ENCODE measurements at regions of chr6 and their contacts with region 1.

Region 1: DNA sequence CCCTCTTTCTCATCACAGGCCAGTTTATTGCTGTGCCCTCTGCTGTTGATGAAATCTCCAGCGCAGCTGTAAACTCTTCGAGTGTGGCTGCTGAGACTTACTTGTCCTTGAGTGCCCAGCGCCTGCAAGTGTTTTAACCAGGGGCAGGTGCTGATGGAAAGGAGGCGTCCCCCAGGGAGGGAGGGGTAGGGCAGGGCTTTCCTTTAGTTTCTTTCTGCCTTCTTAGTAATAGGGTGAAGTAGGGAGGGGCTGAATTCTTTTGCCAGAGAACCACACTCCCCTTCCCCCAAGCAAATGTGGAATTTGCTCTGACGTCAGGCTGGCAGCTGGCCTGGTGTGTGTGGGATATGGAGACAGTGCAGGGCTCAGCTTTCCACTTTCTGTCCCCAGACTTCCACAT is 61.2 kb downstream of the IGF2R start:
- DNase-seq: peak; percentile 93
- ATAC-seq: peak; percentile 95

Region 2: DNA sequence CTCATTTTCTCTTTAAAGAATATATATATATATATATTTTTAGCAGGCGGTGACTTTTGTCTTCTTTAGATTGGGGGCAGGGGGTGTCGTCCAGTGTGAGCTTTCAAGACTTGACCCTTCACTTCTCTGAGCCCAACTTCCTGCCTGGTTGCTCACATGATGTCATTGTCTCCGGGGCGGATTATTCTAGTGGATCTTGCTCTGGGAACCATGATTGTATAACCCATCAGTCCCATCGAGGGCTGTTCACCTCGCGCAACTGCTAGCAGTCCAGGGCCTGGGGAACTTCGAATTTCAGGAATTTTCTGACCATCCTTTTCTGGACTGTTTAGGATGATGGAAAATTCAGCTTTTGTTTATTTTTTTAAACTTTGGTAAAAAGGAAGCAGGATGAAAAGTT is 60.2 kb before region 1 on chr6:
- intact Hi-C with region 1: loop called (anchors 10 kb)
- DNase-seq: no peak
- ATAC-seq: peak; percentile 54

Region 3: DNA sequence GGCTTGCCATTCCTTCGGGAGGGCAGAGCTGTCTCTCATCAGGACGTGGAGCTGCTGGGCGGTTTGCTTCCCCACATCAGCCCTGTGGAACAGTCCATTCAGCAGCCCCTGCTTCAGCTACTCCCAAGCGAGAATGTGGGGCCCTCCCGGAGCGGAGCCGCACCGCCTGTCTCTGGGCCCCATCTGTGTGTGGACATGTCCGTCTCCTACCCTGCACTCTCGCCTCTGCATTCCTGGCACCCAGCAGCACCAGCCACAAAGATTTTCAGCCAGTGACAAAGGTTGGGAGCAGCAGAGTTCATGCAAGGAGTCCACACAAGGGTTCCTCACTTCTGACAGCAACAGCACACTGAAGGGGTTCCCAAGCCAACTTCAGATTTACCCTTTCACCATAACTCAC is 62.5 kb after region 1 on chr6:
- intact Hi-C with region 1: no loop called
- DNase-seq: no peak
- ATAC-seq: no peak

Measured in left ventricle myocardium superior (tissue), 1 donor.